Tibial artery (tissue), 4 donors: ENCODE measurements at regions of chr12 and their contacts with region 1.

Region 1: DNA sequence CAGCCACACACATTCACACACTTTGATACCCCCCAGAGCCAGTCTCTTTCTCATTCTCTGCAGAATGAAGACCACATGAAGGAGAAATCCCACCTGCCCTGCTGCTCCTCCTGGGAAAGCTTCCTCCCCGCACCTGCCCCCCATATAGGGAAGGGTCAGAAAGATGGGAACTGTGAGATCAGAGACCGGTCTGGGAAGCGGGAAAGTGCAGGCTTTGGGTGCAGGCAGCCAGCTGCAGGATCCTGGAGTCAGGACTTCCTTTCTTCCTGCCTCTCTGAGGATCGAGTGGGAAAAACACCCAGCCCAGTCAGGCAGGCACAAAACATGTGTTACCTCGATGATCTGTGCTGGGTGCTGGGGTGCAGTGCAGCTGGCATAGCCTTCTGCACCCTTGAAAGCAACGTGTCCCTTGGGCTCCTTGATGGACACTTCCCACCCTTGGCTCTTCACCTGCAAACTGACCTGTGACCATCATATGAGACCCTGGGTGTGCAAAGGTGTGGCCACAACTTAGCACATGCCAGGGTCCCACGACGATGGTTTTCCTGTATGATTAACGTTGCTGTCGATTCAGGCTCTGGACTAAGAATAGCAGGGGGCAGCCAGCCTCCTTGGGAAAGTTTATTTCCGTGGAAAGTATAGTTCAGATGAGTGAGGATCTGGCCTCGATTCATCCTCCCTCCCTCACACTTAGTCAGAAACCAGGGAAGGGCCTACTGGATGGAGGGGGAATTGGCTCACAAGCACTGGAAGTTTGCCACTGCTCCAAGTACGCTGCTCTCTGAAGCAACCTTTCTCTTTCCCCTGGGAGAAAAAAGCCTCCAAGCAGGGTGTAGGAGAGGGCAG is 105.4 kb upstream of the MED13L start:
- DNase-seq: peak; percentile 87 to 94
- H3K4me3 ChIP-seq: no peak overlapping the region
- H3K27ac ChIP-seq: peak overlapping the region; percentile 21 to 57
- H3K4me1 ChIP-seq: peaks cover 0 to 45% (median 31%) of the 10 kb centered on the region in 4 donors
- H3K27me3 ChIP-seq: no peaks in the 10 kb centered on the region
- CTCF ChIP-seq: peak; percentile 18 to 35

Region 2: DNA sequence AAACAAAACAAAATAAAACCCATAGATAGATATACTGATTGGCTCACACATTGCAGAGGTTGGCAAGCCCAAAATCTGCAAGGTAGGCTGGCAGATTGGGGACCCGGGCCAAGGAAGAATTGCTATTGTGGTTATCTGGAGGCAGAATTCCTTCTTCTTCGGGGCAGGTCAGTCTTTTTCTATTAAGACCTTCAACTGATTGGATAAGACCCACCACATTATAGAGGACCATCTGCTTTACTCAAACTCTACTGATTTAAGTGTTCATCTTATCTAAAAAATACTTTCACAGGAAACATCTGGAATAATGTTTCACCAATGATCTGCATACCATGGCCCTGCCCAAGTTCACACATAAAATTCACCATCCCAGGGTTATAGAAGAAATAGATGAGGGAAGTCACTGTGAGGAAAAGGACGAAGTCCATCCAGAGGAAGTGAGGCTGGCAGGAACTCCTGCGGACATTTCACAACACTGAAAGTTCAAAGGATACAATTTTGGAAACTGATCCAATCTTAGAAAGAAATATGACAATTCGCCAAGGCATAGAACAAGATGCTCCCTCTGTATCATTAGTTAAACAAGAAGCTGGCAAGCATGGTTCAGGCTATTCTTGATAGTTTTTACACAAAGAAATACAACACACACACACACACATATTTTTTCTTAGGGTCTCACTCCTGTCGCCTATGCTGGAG is 22.2 kb after region 1 on chr12:
- intact Hi-C with region 1: loop called (anchors 1 kb)
- DNase-seq: no peak
- H3K4me3 ChIP-seq: no peak overlapping the region
- H3K27ac ChIP-seq: peak overlapping the region; percentile 14 to 46
- H3K4me1 ChIP-seq: peaks cover 0 to 49% (median 26%) of the 10 kb centered on the region in 4 donors
- H3K27me3 ChIP-seq: no peaks in the 10 kb centered on the region
- CTCF ChIP-seq: no peak